PC-3 (cell line): ENCODE measurements at regions of chr1 and their contacts with region 1.

Region 1: GRCh38 chr1:87017998-87018672 is 103.7 kb downstream of the HS2ST1 start:
- DNase-seq: peak; percentile 61
- ATAC-seq: peak; percentile 80
- H3K4me3 ChIP-seq: no peak overlapping the region
- H3K27ac ChIP-seq: no peak overlapping the region
- H3K4me1 ChIP-seq: peaks cover 7% of the 10 kb centered on the region; the same call in 1 of the 2 replicates
- H3K27me3 ChIP-seq: no peaks in the 10 kb centered on the region
- CTCF ChIP-seq: no peak

Region 2: GRCh38 chr1:86913896-86914634 is 104.1 kb before region 1 on chr1 and contains the start of gene SELENOF:
- CTCF ChIA-PET with region 1: no interaction called
- POLR2A ChIA-PET with region 1: no interaction called
- intact Hi-C with region 1: no loop called
- DNase-seq: peak; percentile 100
- ATAC-seq: peak; percentile 83
- H3K4me3 ChIP-seq: peak within 1 kb of the TSS; percentile 99
- H3K27ac ChIP-seq: peak within 1 kb of the TSS; percentile 68
- H3K4me1 ChIP-seq: peaks cover 17% of the 10 kb centered on the region
- H3K27me3 ChIP-seq: no peaks in the 10 kb centered on the region
- CTCF ChIP-seq: no peak
- total RNA-seq, gene SELENOF: 143 and 174 TPM in 2 replicates

Region 3: DNA sequence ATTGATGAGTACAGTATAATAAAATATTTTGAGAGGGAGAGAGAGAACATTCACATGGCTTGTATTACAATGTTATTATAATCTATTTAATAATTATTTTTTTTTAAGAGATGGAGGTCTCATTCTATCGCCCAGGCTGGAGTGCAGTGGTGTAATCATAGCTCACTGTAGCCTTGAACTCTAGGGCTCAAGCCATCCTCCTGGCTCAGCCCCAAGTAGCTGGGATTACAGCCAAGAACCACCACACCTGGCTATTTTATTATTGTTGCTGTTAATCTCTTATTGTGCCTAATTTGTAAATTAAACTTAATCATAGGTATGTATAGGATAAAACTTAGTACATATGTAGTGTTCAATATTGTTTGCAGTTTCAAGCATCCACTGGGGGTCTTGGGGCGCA is 45.9 kb before region 1 on chr1:
- CTCF ChIA-PET with region 1: no interaction called
- POLR2A ChIA-PET with region 1: no interaction called
- intact Hi-C with region 1: loop called (anchors 5 kb)
- DNase-seq: no peak
- ATAC-seq: no peak
- H3K4me3 ChIP-seq: no peak overlapping the region
- H3K27ac ChIP-seq: no peak overlapping the region
- H3K4me1 ChIP-seq: peaks cover 10% of the 10 kb centered on the region
- H3K27me3 ChIP-seq: no peaks in the 10 kb centered on the region
- CTCF ChIP-seq: no peak

Region 4: DNA sequence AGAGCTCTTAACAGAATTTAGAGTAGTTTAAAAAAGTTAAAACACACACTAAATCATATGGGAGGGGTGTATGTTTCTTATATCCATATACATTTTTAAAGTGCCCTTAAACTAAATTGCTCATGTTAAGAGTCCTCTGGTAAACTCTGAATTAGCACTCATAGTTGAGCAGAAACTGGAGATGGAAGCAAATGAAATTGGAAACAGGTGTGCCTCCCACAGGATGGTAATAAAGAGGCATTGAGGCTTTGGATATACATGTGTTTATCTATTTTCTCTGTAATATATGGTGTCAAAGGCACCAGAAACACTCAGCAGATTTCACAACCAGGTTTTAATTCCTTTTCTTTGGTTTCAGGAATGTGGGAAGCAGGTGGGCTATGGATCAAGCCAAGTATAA is 84.9 kb after region 1 on chr1:
- CTCF ChIA-PET with region 1: no interaction called
- POLR2A ChIA-PET with region 1: no interaction called
- intact Hi-C with region 1: no loop called
- DNase-seq: no peak
- ATAC-seq: no peak
- H3K4me3 ChIP-seq: no peak overlapping the region
- H3K27ac ChIP-seq: no peak overlapping the region
- H3K4me1 ChIP-seq: peaks cover 28% of the 10 kb centered on the region
- H3K27me3 ChIP-seq: no peaks in the 10 kb centered on the region
- CTCF ChIP-seq: no peak